ENCODE measurements at regions of chr2 and their contacts with region 1.

Region 1: DNA sequence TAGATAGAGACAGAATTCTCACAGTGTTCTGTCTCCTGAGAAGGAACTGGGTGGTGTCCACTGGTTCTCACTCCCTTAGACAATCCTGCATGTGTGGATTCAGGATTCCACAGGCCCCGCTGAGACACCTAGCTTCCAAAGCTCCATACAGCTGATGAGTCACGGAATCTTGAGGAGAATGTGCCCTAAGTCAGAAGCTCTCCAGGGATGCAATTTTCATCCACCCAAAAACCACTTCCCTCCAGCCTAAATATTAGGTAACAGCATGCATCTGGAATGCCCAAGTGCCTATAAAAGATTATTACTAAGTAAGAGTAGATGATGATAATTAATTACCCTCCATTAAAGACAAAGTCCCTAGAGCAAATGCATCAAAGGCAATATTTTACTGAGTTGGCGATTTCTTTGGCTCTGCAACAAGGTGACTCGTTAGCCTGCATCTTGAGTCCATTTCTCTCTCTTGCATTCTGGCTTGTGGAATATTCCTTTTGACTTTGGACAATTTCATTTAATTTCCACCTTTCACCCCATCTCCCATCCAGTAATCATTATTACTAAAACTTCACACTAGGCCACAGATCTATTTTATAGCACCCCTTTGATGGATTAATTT is 475.1 kb downstream of the TNS1 start:
- DNase-seq: no peak

Region 2: DNA sequence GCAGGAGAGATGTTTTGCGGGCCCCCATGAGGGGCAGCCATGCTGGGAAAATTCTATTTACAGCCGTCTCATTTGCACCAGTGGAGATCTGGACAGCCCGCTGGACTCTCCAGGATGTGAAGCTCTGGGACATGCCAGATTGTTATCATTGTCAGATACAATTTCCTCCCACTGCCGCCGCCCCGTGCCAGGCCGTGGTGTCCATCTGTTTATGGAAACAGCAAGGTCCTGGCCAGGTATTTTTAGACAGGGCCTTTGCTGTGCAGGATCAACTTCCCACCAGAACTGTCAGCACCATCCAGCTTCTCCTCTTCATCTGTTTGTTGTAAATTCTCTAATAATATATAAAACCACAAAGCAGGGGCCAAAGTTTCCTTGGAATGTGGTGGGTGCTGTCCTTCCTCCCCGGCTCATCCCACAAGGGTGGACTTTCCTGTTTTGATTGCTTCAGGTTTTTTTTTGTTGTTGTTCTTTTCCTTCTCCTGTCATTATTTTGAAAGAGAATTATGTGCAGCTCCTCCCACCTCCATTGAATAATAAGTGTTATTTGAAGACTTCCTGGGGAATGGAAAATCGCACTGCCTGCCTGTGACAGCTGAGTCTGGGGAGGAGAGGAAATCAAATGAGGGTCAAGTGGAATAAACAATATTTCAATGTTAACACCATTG is 77.0 kb after region 1 on chr2:
- intact Hi-C with region 1: loop called (anchors 5 kb)
- DNase-seq: no peak

Measured in cardiac septum (tissue), 1 donor.